BJ (cell line): ENCODE measurements at regions of chr14 and their contacts with region 1.

Region 1: GRCh38 chr14:75654127-75654732 is 6.4 kb downstream of the ERG28 start:
- DNase-seq: no peak
- H3K4me3 ChIP-seq: no peak overlapping the region
- H3K27me3 ChIP-seq: no peaks in the 10 kb centered on the region
- CTCF ChIP-seq: peak; percentile 95

Region 2: DNA sequence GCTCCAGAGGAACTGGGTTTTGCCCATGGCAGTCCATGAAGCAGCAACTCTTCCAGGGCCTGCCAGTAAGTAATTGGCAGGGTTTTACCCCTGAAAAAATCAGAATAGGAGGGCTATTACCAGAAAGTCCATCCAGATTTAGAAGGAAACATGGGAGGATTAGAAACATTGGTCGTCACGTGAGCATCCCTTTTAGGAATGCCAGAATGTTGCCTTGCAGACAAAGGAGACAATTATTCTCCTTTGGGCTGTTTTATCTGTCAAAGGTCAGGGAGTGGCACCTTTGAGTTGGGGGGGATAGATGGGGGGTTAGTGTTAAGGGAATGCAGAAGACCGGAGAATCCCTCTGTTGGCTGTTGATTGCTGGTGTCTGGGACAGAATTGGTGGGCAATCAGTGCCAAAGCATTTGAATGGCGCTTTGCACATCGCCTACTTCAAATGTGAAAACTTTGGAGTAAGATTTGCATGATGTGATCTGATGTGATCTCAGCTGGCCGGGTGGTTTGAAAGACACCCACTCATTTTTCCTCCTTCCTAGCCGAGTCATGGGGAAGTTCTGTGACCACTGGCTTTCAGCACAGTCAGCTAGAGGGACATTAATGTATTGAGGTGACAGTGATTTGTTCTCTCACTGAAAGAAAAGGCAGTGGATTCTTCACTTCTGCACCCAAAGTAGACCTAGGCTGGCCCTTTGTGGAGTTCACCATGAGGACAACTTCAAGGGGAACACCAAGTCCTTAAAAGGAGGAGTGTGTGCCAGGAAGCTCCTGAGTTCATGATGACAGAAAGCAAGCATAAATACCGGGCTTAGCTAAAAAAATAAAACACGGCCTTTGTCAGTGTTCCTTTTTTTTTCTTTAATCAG is 44.4 kb before region 1 on chr14:
- CTCF ChIA-PET with region 1: interaction called, 15 read pairs
- POLR2A ChIA-PET with region 1: no interaction called
- DNase-seq: no peak
- H3K4me3 ChIP-seq: no peak overlapping the region
- H3K27me3 ChIP-seq: peaks cover 11% of the 10 kb centered on the region
- CTCF ChIP-seq: no peak